SK-N-SH (cell line): ENCODE measurements at regions of chr20 and their contacts with region 1.

Region 1: GRCh38 chr20:6381887-6382286 is 259.1 kb upstream of the FERMT1 start:
- DNase-seq: peak; percentile 19
- H3K4me3 ChIP-seq: no peak overlapping the region; a peak in 1 of 4 replicates
- H3K27ac ChIP-seq: no peak overlapping the region
- H3K4me1 ChIP-seq: no peaks in the 10 kb centered on the region
- H3K27me3 ChIP-seq: no peaks in the 10 kb centered on the region
- CTCF ChIP-seq: peak; percentile 55
- EP300 ChIP-seq: no peak
- RAD21 ChIP-seq: no peak

Region 2: DNA sequence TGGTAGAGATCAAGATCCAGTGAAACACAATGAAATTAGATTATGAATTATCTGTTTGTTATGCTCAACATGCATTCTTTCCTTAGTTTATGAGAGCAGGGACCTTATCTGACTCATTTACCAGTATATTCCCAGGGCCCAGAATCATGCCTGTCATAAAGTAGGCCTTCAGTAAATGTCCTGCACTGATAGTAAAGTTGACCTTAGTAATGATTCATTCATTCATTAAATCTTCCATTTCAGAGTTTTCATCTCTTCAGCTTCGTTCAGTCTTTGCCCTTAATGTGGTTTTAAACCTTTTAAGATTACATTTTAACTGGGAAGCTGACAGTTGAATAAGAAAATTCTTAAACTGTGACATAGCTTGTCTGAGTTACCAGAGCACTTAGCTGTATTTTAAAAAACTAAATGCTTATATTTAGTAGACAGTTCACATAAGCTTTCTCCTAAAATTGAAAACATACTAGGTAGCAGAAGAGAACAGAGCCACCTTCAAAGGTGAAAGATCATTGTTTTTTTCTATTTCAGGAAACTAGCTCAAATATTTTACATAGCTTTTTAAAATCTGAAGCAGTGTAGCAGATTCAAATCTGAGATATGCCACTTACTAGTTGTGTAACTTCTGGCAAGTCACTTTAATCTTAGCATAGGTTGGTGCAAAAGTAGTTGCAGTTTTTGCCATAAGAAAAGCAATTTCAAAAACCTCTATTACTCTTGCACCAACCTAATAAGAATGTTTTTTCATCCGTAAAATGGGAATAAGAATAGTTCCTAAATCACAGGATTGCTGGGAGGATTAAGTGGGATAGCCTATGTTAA is 390.1 kb before region 1 on chr20:
- CTCF ChIA-PET with region 1: no interaction called
- POLR2A ChIA-PET with region 1: no interaction called
- DNase-seq: no peak
- H3K4me3 ChIP-seq: no peak overlapping the region
- H3K27ac ChIP-seq: peak overlapping the region; percentile 54 to 72; a peak in 3 of 4 replicates
- H3K4me1 ChIP-seq: peaks cover 0 to 14% of the 10 kb centered on the region in 2 experiments; a peak in 3 of 4 replicates
- H3K27me3 ChIP-seq: no peaks in the 10 kb centered on the region
- CTCF ChIP-seq: no peak
- EP300 ChIP-seq: no peak
- RAD21 ChIP-seq: no peak

Region 3: GRCh38 chr20:6395695-6396094 is 13.8 kb after region 1 on chr20:
- CTCF ChIA-PET with region 1: interaction called, 12 read pairs
- POLR2A ChIA-PET with region 1: no interaction called
- DNase-seq: no peak
- H3K4me3 ChIP-seq: no peak overlapping the region
- H3K27ac ChIP-seq: no peak overlapping the region
- H3K4me1 ChIP-seq: no peaks in the 10 kb centered on the region
- H3K27me3 ChIP-seq: no peaks in the 10 kb centered on the region
- CTCF ChIP-seq: no peak
- EP300 ChIP-seq: no peak
- RAD21 ChIP-seq: no peak